Heart right ventricle (tissue), 16 donors: ENCODE measurements at regions of chr1 and their contacts with region 1.

Region 1: GRCh38 chr1:92994105-92994712 is 32.9 kb upstream of the DIPK1A start:
- DNase-seq: peak in 1 of 2 donors; percentile 85
- ATAC-seq: peak; percentile 85 to 94 (median 91)
- H3K4me3 ChIP-seq: no peak overlapping the region
- H3K27ac ChIP-seq: peak overlapping the region in 1 of 10 donors; percentile 13
- H3K4me1 ChIP-seq: peaks cover 0 to 18% (median 0%) of the 10 kb centered on the region in 9 donors
- H3K27me3 ChIP-seq: no peaks in the 10 kb centered on the region
- CTCF ChIP-seq: peak; percentile 79 to 95 (median 87)

Region 2: DNA sequence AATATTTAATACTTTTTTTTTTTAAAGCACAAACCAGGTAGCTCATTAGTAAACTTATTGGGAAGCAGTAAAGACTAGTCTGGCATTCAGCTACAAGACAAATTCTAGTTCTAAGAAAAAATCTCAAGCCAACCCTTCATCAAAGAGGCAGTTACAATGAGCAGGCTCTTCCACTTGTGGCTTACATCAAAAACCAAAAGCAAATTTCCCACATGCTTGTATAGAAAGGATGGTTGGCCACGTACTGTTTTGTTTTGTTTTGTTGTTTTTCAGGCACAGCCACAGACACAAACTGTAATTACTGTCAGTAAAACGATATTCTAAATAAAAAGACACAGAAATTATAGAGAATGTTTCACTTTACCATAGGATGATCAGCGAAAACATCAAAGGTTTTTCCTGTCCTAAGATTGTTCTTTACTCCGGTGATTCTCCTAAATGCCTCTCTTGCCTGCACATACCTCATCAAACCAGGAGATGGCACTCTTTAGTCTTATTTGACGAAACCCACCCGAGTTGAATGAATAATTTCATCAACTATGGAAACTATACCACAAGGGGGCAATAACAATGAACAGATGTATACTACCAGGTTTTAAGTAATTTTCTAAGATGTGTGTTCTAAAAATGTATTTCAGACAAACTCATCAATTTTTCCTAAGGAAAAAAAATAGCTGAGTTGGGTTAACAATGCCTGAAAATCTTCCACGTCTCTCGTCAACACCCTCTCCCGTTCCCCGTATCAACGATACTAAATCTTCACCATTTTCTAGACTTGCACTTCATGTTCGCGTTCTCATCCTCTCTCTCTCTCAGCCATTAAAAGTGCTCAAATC is 135.4 kb before region 1 on chr1:
- intact Hi-C with region 1: loop called (anchors 1 to 5 kb)
- DNase-seq: peak in 1 of 2 donors; percentile 63
- ATAC-seq: peak; percentile 63 to 89 (median 82)
- H3K4me3 ChIP-seq: peak overlapping the region in 7 of 10 donors; percentile 21 to 42 (median 38)
- H3K27ac ChIP-seq: peak overlapping the region in 1 of 10 donors; percentile 3
- H3K4me1 ChIP-seq: peaks cover 0 to 15% (median 5%) of the 10 kb centered on the region in 9 donors
- H3K27me3 ChIP-seq: no peaks in the 10 kb centered on the region
- CTCF ChIP-seq: peak; percentile 89 to 100 (median 96)

Region 3: DNA sequence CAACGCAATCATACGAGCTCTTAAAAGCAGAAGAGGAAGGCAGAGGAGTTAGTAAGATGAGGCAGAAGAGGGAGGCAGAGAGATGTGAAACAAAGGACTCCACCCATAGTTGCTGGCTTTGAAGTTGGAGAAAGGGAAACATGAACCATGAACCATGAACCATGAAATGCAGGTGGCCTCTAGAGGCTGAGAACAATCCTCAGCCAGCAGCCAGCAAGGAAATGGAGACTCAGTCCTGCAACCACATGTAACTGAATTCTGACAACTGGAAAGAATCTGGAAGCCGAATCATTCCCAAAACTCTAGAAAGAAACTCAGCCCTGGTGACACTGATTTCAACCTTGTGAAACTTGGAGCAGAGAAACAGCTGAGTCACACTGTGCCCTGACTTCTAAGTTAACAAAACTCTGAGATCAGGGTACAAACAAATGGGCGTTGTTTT is 43.0 kb before region 1 on chr1:
- intact Hi-C with region 1: loop called in 1 of 10 experiments (anchors 5 kb)
- DNase-seq: no peak
- ATAC-seq: peak in 2 of 8 donors; percentile 15 to 63
- H3K4me3 ChIP-seq: no peak overlapping the region
- H3K27ac ChIP-seq: peak overlapping the region in 2 of 10 donors; percentile 8 to 17
- H3K4me1 ChIP-seq: peaks cover 0 to 50% (median 19%) of the 10 kb centered on the region in 9 donors
- H3K27me3 ChIP-seq: no peaks in the 10 kb centered on the region
- CTCF ChIP-seq: no peak

Region 4: GRCh38 chr1:92960395-92961130 is 33.6 kb before region 1 on chr1:
- intact Hi-C with region 1: loop called in 9 of 10 experiments (anchors 2 to 5 kb)
- DNase-seq: peak; percentile 28 to 68
- ATAC-seq: peak; percentile 60 to 85 (median 80)
- H3K4me3 ChIP-seq: peak overlapping the region; percentile 52 to 99 (median 88)
- H3K27ac ChIP-seq: peak overlapping the region; percentile 63 to 98 (median 97)
- H3K4me1 ChIP-seq: peaks cover 0 to 46% (median 22%) of the 10 kb centered on the region in 9 donors
- H3K27me3 ChIP-seq: peaks cover 0 to 4% (median 0%) of the 10 kb centered on the region in 7 donors
- CTCF ChIP-seq: peak; percentile 15 to 84 (median 63)